ENCODE measurements at regions of chr19 and their contacts with region 1.

Region 1: GRCh38 chr19:52258426-52258825 is 11.0 kb upstream of the ZNF766 start:
- DNase-seq: no peak
- ATAC-seq: no peak
- H3K4me3 Mint-ChIP-seq: no peak overlapping the region
- H3K27ac Mint-ChIP-seq: no peak overlapping the region
- H3K4me1 Mint-ChIP-seq: no peaks in the 10 kb centered on the region
- H3K27me3 Mint-ChIP-seq: peaks cover 0 to 12% (median 3%) of the 10 kb centered on the region in 5 donors

Region 2: GRCh38 chr19:52065399-52065798 is 193.0 kb before region 1 on chr19:
- POLR2A ChIA-PET with region 1: interaction called, 11 read pairs
- DNase-seq: no peak
- ATAC-seq: no peak
- H3K4me3 Mint-ChIP-seq: peak overlapping the region in 1 of 10 donors; percentile 8
- H3K27ac Mint-ChIP-seq: no peak overlapping the region
- H3K4me1 Mint-ChIP-seq: peaks cover 0 to 3% (median 0%) of the 10 kb centered on the region in 4 donors
- H3K27me3 Mint-ChIP-seq: no peaks in the 10 kb centered on the region

Measured in naive thymus-derived CD8-positive, alpha-beta T cell (primary cell).